Colonic mucosa (tissue), 4 donors: ENCODE measurements at regions of chr11 and their contacts with region 1.

Region 1: DNA sequence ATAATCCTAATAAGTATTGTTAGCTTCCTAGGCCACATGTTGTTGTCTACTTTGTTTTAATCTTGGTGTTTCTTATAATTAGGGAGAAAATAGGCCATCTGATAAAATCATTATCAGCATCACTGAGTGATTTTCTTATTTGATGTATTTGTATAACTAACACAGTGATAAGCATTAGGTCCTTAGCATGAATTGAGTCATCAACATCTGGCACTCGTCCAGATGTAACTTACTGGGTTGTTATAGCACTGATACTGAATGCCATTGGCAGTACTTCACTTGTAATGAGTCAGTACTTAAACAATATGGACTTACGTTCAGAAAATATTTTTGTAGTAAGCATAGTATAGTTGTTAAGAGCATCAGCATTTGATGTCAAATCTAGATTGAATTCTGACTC is 16.2 kb downstream of the API5 start:
- DNase-seq: no peak
- H3K4me3 ChIP-seq: no peak overlapping the region
- H3K27ac ChIP-seq: no peak overlapping the region
- H3K4me1 ChIP-seq: no peaks in the 10 kb centered on the region
- H3K27me3 ChIP-seq: no peaks in the 10 kb centered on the region
- CTCF ChIP-seq: no peak

Region 2: GRCh38 chr11:43145653-43146052 is 182.3 kb before region 1 on chr11:
- intact Hi-C with region 1: no loop called
- DNase-seq: no peak
- H3K4me3 ChIP-seq: no peak overlapping the region
- H3K27ac ChIP-seq: no peak overlapping the region
- H3K4me1 ChIP-seq: no peaks in the 10 kb centered on the region
- H3K27me3 ChIP-seq: no peaks in the 10 kb centered on the region
- CTCF ChIP-seq: no peak

Region 3: DNA sequence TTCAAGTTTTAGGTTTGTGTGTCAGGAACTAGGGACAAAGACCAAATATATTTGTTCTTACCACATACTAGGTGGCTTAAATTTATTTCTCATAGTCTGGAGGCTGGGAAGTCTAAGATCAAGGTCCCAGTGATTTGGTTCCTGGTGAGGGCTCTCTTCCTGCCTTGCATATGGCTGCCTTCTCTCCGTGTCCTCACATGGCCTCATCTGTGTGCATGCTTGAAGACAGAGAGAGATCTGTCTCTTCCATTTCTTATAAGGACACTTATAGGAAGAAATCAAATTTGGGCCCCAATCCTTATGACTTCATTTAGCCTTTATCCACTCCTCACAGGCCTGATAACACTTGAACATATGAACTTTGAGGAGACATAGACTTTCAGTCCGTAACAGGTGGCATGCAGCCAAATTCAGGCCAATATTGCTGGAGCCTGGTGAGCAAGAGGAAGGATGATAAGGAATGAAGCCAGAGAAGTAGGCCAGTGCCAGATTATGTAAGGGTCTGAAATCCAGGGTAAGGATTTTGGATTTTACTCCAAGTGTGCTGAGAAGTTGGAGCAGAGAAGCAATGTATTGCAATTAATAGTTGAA is 65.9 kb after region 1 on chr11:
- intact Hi-C with region 1: loop called (anchors 10 kb)
- DNase-seq: peak; percentile 29
- H3K4me3 ChIP-seq: no peak overlapping the region
- H3K27ac ChIP-seq: no peak overlapping the region
- H3K4me1 ChIP-seq: no peaks in the 10 kb centered on the region
- H3K27me3 ChIP-seq: no peaks in the 10 kb centered on the region
- CTCF ChIP-seq: no peak